AG04450 (cell line): ENCODE measurements at regions of chr10 and their contacts with region 1.

Region 1: DNA sequence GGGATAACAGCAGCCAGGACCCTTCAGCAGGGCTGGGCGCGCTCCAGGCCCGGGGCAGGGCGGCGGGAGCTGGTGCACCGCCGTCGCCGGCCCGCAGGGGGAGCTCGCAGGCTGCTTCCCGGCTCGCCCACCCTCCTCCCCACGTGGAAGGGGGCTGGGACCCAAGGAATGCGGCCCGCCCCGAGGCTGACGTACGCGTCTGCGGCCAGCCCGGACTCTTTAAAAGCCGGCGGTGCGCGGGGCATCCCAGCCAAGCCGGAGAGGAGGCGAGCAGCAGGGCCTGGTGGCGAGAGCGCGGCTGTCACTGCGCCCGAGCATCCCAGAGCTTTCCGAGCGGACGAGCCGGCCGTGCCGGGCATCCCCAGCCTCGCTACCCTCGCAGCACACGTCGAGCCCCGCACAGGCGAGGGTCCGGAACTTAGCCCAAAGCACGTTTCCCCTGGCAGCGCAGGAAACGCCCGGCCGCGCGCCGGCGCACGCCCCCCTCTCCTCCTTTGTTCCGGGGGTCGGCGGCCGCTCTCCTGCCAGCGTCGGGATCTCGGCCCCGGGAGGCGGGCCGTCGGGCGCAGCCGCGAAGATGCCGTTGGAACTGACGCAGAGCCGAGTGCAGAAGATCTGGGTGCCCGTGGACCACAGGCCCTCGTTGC is at the start of gene PFKFB3:
- DNase-seq: peak; percentile 91
- H3K4me3 ChIP-seq: peak within 1 kb of the TSS; percentile 80
- H3K27ac ChIP-seq: peak within 1 kb of the TSS; percentile 90
- H3K27me3 ChIP-seq: no peaks in the 10 kb centered on the region
- CTCF ChIP-seq: peak; percentile 79
- polyA plus RNA-seq, gene PFKFB3: 24.3 and 26.6 TPM in 2 replicates

Region 2: GRCh38 chr10:6136215-6137201 is 66.3 kb before region 1 on chr10:
- CTCF ChIA-PET with region 1: interaction called, 9 read pairs
- POLR2A ChIA-PET with region 1: interaction called, 11 read pairs
- DNase-seq: peak; percentile 32
- H3K4me3 ChIP-seq: peak overlapping the region; percentile 37; the same call in 1 of the 2 replicates
- H3K27ac ChIP-seq: peak overlapping the region; percentile 73
- H3K27me3 ChIP-seq: no peaks in the 10 kb centered on the region
- CTCF ChIP-seq: 0 out of 2 replicates have a peak, but pooled peaks have one; percentile 9

Region 3: DNA sequence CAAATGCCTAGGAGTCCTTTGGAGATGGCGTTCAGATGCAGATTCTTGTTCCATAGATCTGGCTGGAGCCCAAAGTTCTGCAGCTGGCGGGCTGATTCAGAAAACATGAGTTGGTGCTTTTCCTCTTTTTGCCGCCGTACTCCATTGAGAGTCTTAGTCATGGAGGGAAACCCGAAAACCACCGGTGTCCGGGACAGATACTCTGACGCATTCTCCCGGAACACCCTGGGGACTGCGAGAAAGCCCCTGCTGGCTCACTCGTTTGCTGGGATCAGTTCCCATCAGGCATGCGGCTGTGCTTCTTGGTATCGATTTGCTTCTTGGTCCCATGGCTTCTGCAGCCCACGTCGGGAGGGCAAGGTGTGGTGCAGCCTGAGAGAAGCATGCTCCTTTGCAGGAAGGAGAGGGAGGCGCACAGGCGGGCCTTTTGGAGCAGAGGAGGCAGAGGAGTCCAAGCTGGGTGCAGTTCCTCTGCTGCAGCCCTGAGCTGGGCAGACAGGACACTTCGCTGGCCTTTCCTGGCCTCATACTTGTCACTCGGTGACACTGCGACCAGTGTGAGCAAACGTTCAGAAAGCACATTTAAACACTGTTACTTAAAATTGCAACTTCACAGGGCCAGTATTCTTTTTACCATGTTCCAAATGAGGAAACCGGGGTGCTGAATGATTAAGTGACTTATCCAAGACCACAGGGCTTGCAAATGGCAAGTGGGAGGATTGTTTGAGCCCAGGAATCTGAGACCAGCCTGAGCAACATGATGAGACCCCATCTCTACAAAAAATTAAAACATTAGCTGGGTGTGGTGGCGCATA is 30.7 kb before region 1 on chr10:
- CTCF ChIA-PET with region 1: interaction called, 6 read pairs
- POLR2A ChIA-PET with region 1: interaction called, 13 read pairs
- DNase-seq: peak; percentile 75
- H3K4me3 ChIP-seq: peak overlapping the region; percentile 17
- H3K27ac ChIP-seq: peak overlapping the region; percentile 81
- H3K27me3 ChIP-seq: no peaks in the 10 kb centered on the region
- CTCF ChIP-seq: no peak

Region 4: GRCh38 chr10:6396652-6397051 is 193.8 kb after region 1 on chr10:
- CTCF ChIA-PET with region 1: interaction called, 221 read pairs
- POLR2A ChIA-PET with region 1: interaction called, 176 read pairs
- DNase-seq: peak; percentile 68
- H3K4me3 ChIP-seq: no peak overlapping the region
- H3K27ac ChIP-seq: peak overlapping the region; percentile 41
- H3K27me3 ChIP-seq: no peaks in the 10 kb centered on the region
- CTCF ChIP-seq: no peak